Astrocyte of the cerebellum (primary cell): ENCODE measurements at regions of chr15 and their contacts with region 1.

Region 1: GRCh38 chr15:100997442-100997841 is 78.3 kb downstream of the LRRK1 start:
- DNase-seq: no peak
- H3K4me3 ChIP-seq: no peak overlapping the region
- CTCF ChIP-seq: no peak

Region 2: GRCh38 chr15:100919481-100920405 is 77.7 kb before region 1 on chr15:
- in situ Hi-C with region 1: loop called (anchors 10 kb)
- DNase-seq: no peak
- H3K4me3 ChIP-seq: peak overlapping the region; percentile 55
- CTCF ChIP-seq: no peak